Heart right ventricle (tissue), 16 donors: ENCODE measurements at regions of chr6 and their contacts with region 1.

Region 1: GRCh38 chr6:2999618-3000557 is at the start of gene NQO2:
- DNase-seq: peak; percentile 91 to 97
- ATAC-seq: peak; percentile 93 to 96 (median 94)
- H3K4me3 ChIP-seq: peak within 1 kb of the TSS; percentile 74 to 93 (median 84)
- H3K27ac ChIP-seq: peak within 1 kb of the TSS; percentile 73 to 95 (median 92)
- H3K4me1 ChIP-seq: peaks cover 0 to 45% (median 26%) of the 10 kb centered on the region in 9 donors
- H3K27me3 ChIP-seq: no peaks in the 10 kb centered on the region
- CTCF ChIP-seq: peak in 2 of 9 donors; percentile 6 to 18
- total RNA-seq, gene NQO2: 29.5 to 88.4 (median 48.2) TPM

Region 2: DNA sequence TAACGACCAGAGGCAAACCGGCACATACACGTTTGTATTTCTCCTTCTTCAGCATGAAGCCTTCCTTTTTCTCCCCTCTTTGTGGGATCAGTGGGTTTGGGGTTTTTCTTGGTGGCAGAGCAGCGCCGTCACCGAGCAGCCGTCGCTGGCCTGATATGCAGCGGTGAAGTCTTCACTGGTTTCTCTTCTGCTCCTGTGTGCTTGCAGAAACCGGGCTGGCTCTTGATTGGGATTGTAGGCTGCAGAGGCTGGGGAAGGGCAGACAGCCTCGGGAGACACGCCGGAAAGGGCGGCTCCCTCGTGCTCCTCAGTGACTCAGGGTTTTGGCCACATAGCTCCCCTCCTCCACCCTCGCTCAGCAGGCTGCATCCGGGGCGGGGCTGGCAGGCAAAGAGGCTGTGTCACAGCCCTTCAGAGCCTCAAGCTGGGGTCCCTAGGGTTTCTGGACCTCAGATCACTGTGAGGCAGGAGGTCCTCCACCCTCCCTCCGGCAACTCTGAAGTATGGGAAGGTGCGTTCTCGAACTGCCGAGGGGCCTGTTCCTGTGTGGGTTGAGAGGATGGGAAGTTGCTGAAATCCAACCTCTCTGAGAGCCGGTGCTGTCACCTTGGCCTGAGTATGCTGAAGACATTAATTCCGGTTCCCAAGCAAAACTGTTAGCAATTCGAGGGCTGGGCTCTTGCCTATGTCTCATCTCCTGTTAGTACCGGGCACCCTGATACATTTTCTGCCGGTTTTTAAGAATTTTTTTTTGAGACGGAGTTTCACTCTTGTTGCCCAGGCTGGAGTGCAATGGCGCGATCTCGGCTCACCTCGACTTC is 24.0 kb after region 1 on chr6:
- intact Hi-C with region 1: loop called in 2 of 10 experiments (anchors 1 kb)
- DNase-seq: peak; percentile 94 to 95
- ATAC-seq: peak; percentile 96 to 98 (median 97)
- H3K4me3 ChIP-seq: peak overlapping the region; percentile 34 to 67 (median 56)
- H3K27ac ChIP-seq: peak overlapping the region; percentile 73 to 96 (median 91)
- H3K4me1 ChIP-seq: peaks cover 0 to 64% (median 26%) of the 10 kb centered on the region in 9 donors
- H3K27me3 ChIP-seq: no peaks in the 10 kb centered on the region
- CTCF ChIP-seq: no peak

Region 3: DNA sequence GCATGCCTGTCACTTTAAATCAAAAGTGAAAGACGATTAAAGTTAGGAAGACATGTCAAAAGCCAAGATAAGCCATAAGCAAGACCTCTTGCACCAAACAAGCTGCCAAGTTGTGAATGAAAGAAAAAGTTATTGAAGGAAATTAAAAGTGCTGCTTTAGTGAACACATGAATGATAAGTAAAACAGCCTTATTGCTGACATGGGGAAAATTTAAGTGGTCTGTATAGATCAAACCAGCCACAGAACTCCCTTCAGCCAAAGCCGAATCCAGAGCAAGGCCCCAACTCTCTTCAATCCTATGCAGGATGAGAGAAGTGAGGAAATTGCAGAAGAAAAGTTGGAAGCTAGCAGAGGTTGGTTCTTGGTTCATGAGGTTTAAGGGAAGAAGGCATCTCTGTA is 59.1 kb after region 1 on chr6:
- intact Hi-C with region 1: loop called in 6 of 10 experiments (anchors 1 to 2 kb)
- DNase-seq: no peak
- ATAC-seq: no peak
- H3K4me3 ChIP-seq: no peak overlapping the region
- H3K27ac ChIP-seq: no peak overlapping the region
- H3K4me1 ChIP-seq: peaks cover 0 to 16% (median 11%) of the 10 kb centered on the region in 9 donors
- H3K27me3 ChIP-seq: no peaks in the 10 kb centered on the region
- CTCF ChIP-seq: no peak